Naive thymus-derived CD4-positive, alpha-beta T cell (primary cell): ENCODE measurements at regions of chr1 and their contacts with region 1.

Region 1: GRCh38 chr1:185156854-185157598 is at the starts of genes SWT1 and TRMT1L:
- DNase-seq: peak; percentile 91 to 97 (median 96)
- ATAC-seq: peak; percentile 95
- H3K4me3 ChIP-seq: peak within 1 kb of the TSS; percentile 88
- H3K4me3 Mint-ChIP-seq: peak within 1 kb of the TSS; percentile 97 to 100 (median 98)
- H3K27ac ChIP-seq: peak within 1 kb of the TSS; percentile 97
- H3K27ac Mint-ChIP-seq: peak within 1 kb of the TSS; percentile 96 to 100 (median 98)
- H3K4me1 ChIP-seq: peaks cover 9 to 20% of the 10 kb centered on the region in 2 donors
- H3K4me1 Mint-ChIP-seq: peaks cover 28 to 67% (median 56%) of the 10 kb centered on the region in 7 donors
- H3K27me3 ChIP-seq: no peaks in the 10 kb centered on the region
- H3K27me3 Mint-ChIP-seq: no peaks in the 10 kb centered on the region
- total RNA-seq, gene SWT1: 4.4 to 11.5 (median 5.2) TPM
- total RNA-seq, gene TRMT1L: 11.6 to 33.9 (median 27.3) TPM

Region 2: DNA sequence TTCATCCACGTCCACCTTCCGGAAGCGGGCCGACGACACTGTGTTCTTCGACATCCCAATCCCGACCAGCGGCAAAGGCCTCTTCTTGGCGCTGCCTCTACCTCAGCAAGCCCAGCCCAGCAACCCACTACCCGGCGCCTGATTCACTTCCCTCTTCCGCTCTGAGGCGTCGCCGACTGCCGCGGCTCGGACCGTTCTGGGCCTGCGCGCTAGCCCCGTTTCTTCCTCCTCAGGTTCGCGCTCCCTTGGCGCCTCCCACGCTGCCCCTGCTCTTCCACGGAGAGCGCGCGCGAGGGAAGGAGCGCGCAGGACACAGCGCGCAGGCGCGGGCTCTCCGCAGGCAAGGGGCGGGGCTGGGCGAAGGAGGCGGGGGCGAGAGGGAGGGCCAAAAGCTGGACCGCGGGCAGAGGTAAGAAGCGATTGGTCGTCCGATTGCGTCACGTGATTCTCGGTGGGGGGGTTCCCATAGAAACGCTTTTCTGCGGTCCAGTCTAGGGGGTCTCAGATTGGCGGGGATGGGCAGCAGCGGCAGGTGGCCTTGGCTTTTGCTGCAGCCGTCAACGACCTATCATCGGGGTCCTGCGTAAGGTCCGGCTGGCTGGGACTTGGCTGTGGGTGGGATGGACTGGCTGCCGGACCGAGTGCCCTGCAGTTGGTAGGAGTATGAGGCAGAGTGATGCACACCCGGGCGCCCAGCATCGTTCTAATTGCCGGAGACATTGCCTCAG is 1521.3 kb before region 1 on chr1 and contains the start of gene ARPC5:
- CTCF ChIA-PET with region 1: no interaction called
- POLR2A ChIA-PET with region 1: no interaction called
- intact Hi-C with region 1: loop called (anchors 2 kb)
- DNase-seq: peak; percentile 90 to 98 (median 92)
- ATAC-seq: peak; percentile 92
- H3K4me3 ChIP-seq: peak within 1 kb of the TSS; percentile 94
- H3K4me3 Mint-ChIP-seq: peak within 1 kb of the TSS; percentile 95 to 100 (median 100)
- H3K27ac ChIP-seq: peak within 1 kb of the TSS; percentile 80
- H3K27ac Mint-ChIP-seq: peak within 1 kb of the TSS; percentile 94 to 100 (median 99)
- H3K4me1 ChIP-seq: peaks cover 14 to 22% of the 10 kb centered on the region in 2 donors
- H3K4me1 Mint-ChIP-seq: peaks cover 15 to 50% (median 39%) of the 10 kb centered on the region in 7 donors
- H3K27me3 ChIP-seq: no peaks in the 10 kb centered on the region
- H3K27me3 Mint-ChIP-seq: peaks cover 0 to 27% (median 0%) of the 10 kb centered on the region in 5 donors
- total RNA-seq, gene ARPC5: 49.9 to 252 (median 105) TPM

Region 3: DNA sequence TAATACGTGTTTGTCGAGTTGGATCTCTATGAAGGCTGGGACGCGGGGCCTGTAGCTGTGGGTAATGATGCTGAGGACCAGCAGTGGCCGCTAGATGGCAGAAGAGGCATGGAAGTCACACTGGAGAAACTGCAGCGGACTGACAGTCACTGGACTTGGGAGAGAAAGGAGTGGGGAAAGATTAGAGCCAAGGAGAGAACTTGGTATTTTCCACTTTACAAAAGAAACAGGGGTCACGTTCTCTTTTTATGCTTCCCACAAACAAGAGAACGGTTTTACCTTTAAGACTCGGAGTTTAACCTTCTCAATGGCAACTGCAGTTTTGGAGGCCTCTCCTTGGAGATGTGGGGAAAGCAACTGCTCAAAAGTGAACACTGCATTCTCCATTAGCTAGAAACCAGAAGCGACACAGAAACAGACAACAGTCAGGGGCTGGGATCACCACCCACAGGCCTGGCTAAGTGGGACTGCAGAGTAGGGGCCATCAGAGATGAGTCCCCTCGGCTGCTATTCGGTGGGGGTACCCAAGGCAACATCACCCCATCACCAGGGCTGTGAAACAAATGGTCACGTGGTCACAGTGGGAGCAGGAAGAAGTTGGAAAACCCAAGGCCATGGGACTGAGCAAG is 351.2 kb before region 1 on chr1:
- CTCF ChIA-PET with region 1: interaction called, 3 read pairs
- POLR2A ChIA-PET with region 1: no interaction called
- intact Hi-C with region 1: loop called in 1 of 2 experiments (anchors 5 kb)
- DNase-seq: peak; percentile 49 to 79 (median 68)
- ATAC-seq: peak; percentile 94
- H3K4me3 ChIP-seq: no peak overlapping the region
- H3K4me3 Mint-ChIP-seq: peak overlapping the region in 2 of 10 donors; percentile 2 to 27
- H3K27ac ChIP-seq: no peak overlapping the region
- H3K27ac Mint-ChIP-seq: peak overlapping the region in 2 of 9 donors; percentile 7 to 16
- H3K4me1 ChIP-seq: no peaks in the 10 kb centered on the region
- H3K4me1 Mint-ChIP-seq: peaks cover 4 to 6% (median 5%) of the 10 kb centered on the region in 7 donors
- H3K27me3 ChIP-seq: no peaks in the 10 kb centered on the region
- H3K27me3 Mint-ChIP-seq: no peaks in the 10 kb centered on the region

Region 4: DNA sequence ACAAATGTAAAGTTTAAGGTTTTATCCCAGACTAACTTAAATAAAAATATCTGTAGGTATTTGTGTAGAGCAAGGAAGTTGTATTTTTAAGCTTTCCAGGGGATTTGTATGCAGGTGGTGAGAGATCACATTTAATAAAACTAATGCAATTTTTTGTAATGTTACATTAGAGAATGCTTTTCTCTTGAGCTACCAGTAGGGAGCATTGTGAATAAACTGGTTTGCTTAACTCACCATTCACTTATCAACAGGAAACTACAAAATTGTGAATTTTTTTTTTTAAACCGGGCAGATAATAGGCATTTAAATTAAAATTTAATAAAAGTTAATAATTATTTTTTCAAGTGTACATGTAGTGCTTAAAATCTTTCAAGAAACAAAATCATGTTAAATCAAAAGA is 81.4 kb after region 1 on chr1:
- CTCF ChIA-PET with region 1: no interaction called
- POLR2A ChIA-PET with region 1: no interaction called
- intact Hi-C with region 1: loop called in 1 of 2 experiments (anchors 1 kb)
- DNase-seq: peak in 6 of 9 donors; percentile 11 to 49 (median 35)
- ATAC-seq: peak; percentile 64
- H3K4me3 ChIP-seq: no peak overlapping the region
- H3K4me3 Mint-ChIP-seq: peak overlapping the region in 9 of 10 donors; percentile 3 to 73 (median 45)
- H3K27ac ChIP-seq: no peak overlapping the region
- H3K27ac Mint-ChIP-seq: peak overlapping the region in 4 of 9 donors; percentile 3 to 81 (median 13)
- H3K4me1 ChIP-seq: peaks cover 7 to 10% of the 10 kb centered on the region in 2 donors
- H3K4me1 Mint-ChIP-seq: peaks cover 5 to 33% (median 29%) of the 10 kb centered on the region in 7 donors
- H3K27me3 ChIP-seq: no peaks in the 10 kb centered on the region
- H3K27me3 Mint-ChIP-seq: no peaks in the 10 kb centered on the region

Region 5: DNA sequence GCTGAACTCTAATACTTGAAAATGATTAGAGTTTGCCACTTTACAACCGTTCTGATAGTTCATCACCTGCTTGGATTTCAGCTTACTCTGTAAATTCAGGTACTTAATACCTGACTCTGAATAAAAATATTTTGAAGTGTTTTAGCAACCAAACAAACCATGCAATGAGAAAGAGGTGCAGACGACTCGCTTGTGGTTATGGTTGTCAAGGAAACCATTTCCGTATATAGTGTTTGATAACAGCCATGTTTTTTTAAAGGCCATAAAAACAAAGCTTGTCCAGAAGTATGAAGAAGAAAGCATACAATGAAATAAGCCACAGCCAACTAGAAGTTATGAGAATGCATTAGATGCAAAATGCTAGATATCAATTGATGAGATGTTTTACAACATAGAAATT is 410.0 kb after region 1 on chr1:
- CTCF ChIA-PET with region 1: no interaction called
- POLR2A ChIA-PET with region 1: interaction called, 4 read pairs
- intact Hi-C with region 1: loop called (anchors 1 kb)
- DNase-seq: peak in 7 of 9 donors; percentile 85 to 94 (median 91)
- ATAC-seq: peak; percentile 92
- H3K4me3 ChIP-seq: no peak overlapping the region
- H3K4me3 Mint-ChIP-seq: peak overlapping the region; percentile 46 to 87 (median 78)
- H3K27ac ChIP-seq: peak overlapping the region; percentile 89
- H3K27ac Mint-ChIP-seq: peak overlapping the region; percentile 96 to 100 (median 98)
- H3K4me1 ChIP-seq: peaks cover 37 to 56% of the 10 kb centered on the region in 2 donors
- H3K4me1 Mint-ChIP-seq: peaks cover 47 to 91% (median 86%) of the 10 kb centered on the region in 7 donors
- H3K27me3 ChIP-seq: no peaks in the 10 kb centered on the region
- H3K27me3 Mint-ChIP-seq: no peaks in the 10 kb centered on the region

Region 6: DNA sequence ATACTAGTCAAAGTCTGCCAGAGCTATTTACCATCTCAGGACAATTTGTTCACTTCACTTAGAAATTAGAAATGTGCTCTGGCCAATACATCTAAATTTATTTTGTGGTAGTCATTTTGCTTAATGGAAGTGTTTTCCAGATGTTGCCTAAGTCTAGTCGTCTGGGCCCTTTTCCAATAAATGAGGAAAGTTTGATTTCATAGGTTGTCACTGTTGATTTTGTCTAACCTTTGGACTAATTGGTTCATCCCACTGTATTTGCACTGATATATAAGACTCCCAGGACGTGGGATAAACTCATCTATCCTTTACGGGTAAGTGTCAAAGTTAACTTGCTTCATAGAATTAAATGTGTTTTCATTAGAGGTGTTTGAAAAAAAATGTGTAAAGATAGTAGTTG is 1139.0 kb after region 1 on chr1:
- CTCF ChIA-PET with region 1: no interaction called
- POLR2A ChIA-PET with region 1: no interaction called
- intact Hi-C with region 1: loop called in 1 of 2 experiments (anchors 10 kb)
- DNase-seq: no peak
- ATAC-seq: no peak
- H3K4me3 ChIP-seq: no peak within 1 kb of the TSS
- H3K4me3 Mint-ChIP-seq: peak within 1 kb of the TSS in 5 of 10 donors; percentile 5 to 40 (median 26)
- H3K27ac ChIP-seq: no peak within 1 kb of the TSS
- H3K27ac Mint-ChIP-seq: peak within 1 kb of the TSS in 7 of 9 donors; percentile 18 to 100 (median 33)
- H3K4me1 ChIP-seq: peaks cover 0 to 8% of the 10 kb centered on the region in 2 donors
- H3K4me1 Mint-ChIP-seq: peaks cover 6 to 71% (median 56%) of the 10 kb centered on the region in 7 donors
- H3K27me3 ChIP-seq: no peaks in the 10 kb centered on the region
- H3K27me3 Mint-ChIP-seq: no peaks in the 10 kb centered on the region